Activated naive CD4-positive, alpha-beta T cell treated with anti-CD3 and anti-CD28 coated beads, Interleukin-2, amount 10 ng/mL, durations not matched to agents 7 days and 5 days (primary cell): ENCODE measurements at regions of chr17 and their contacts with region 1.

Region 1: DNA sequence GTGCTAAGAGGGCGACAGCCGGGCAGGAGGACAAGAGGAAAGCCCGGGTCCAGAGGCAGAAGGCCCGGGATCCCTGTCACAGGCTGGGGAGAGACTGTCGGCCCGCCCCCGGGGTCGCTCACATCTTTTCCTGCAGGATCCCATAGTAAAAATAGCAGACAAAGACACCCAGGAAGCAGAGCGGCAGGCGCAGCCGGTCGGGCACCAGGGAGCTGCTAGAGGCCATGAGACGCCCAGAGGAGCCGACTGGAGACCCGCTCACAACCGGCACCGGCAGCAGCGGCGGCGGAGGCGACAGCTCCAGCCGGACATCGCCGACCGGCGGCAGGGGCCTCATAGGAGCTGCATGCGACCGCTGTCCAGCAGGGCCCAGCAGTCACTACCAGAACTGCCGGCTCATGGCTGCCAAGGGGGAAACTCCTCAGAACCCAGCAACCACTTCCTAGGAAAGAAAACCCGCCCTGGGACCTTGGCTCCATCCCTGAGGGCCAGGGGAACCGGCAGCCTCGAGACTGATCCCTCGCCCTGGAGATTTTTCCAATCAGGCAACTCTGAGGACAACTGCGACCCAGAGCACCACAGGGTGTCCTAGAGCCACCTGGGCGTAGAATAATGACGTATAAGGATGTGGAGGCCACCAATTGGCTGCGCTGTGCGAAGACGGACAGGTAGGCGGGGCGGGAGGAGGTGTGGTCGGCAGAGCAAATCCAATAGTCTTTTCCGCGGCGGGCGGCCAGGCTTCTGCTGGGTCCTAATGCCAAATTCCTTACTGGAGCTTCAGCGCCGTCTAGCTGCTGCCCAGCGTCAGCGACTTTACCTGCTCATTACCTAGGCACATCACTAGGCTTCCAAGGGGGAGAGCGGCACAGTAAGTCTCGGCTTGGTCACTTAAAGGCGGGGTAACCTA is at the start of gene SLC35B1:
- DNase-seq: peak; percentile 100
- H3K4me3 Mint-ChIP-seq: peak within 1 kb of the TSS; percentile 94
- H3K27ac Mint-ChIP-seq: peak within 1 kb of the TSS; percentile 95
- H3K4me1 Mint-ChIP-seq: peaks cover 51% of the 10 kb centered on the region
- H3K27me3 Mint-ChIP-seq: no peaks in the 10 kb centered on the region

Region 2: GRCh38 chr17:49567871-49568694 is 139.8 kb before region 1 on chr17:
- CTCF ChIA-PET with region 1: interaction called, 377 read pairs
- DNase-seq: peak; percentile 88
- H3K4me3 Mint-ChIP-seq: peak overlapping the region; percentile 43
- H3K27ac Mint-ChIP-seq: no peak overlapping the region
- H3K4me1 Mint-ChIP-seq: peaks cover 27% of the 10 kb centered on the region
- H3K27me3 Mint-ChIP-seq: peaks cover 66% of the 10 kb centered on the region

Region 3: GRCh38 chr17:49694847-49695683 is 12.8 kb before region 1 on chr17:
- CTCF ChIA-PET with region 1: interaction called, 53 read pairs
- DNase-seq: peak; percentile 80
- H3K4me3 Mint-ChIP-seq: no peak overlapping the region
- H3K27ac Mint-ChIP-seq: peak overlapping the region; percentile 33
- H3K4me1 Mint-ChIP-seq: peaks cover 39% of the 10 kb centered on the region
- H3K27me3 Mint-ChIP-seq: peaks cover 5% of the 10 kb centered on the region

Region 4: DNA sequence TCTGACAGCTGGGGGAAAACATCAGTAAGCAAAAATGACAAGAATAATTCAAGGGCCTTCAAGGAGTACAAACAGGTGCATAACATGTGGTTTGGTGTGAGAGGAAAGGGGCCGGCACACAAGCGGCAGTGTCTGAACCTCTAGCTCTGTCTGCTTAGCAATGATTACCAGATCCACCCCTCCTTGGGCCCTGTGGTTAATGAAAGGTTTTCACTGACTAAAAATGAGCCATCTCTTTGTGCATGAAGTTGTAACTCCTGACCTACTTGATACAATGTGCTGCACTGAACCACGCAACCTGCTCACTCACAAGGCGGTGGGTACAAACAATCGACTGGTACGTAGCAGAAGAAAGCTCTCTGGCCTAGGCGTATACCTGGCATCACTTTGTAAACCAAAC is 40.9 kb after region 1 on chr17:
- CTCF ChIA-PET with region 1: interaction called, 16 read pairs
- DNase-seq: peak; percentile 69
- H3K4me3 Mint-ChIP-seq: peak overlapping the region; percentile 76
- H3K27ac Mint-ChIP-seq: peak overlapping the region; percentile 95
- H3K4me1 Mint-ChIP-seq: peaks cover 82% of the 10 kb centered on the region
- H3K27me3 Mint-ChIP-seq: no peaks in the 10 kb centered on the region

Region 5: DNA sequence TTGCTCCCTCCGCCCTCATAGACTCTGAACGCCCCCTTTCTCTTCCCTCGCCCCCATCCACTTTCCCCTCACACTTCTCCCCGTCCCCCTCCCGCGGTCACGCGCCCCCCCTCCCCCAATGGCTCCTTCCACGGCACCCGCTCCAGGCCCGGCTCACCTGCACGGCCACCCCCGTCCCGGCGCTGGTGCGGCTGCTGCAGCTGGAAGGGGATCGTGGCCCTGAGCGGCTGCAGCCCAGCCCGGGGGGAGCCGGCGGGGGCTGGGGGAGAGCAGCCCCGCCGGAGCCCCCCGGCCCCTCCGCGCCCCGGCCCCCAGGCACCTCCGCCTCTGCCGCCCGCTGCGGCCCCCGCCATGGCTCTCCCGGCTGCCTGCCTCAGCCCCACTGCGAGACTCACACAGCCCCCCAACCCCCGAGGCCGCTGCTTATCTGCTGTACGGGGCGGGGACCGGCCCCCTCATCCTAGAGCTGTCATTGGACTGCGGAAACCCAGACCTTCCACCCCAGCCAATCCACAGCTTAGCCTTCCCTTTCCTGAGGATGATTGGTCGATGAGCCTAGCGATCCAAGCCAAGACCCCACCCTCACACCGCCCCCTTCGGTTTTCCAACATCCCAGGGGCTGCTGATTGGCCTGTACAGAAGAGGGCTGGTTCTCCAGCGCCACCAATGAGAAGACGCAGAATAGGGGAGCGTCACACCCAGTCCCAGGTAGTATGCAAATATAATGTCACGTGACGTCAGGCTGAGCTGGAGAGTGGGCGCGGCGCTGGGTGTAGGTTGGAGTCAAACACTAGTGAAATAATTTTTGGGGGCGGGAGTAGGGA is 56.1 kb after region 1 on chr17 and contains the start of gene FAM117A:
- CTCF ChIA-PET with region 1: interaction called, 10 read pairs
- DNase-seq: peak; percentile 99
- H3K4me3 Mint-ChIP-seq: peak within 1 kb of the TSS; percentile 90
- H3K27ac Mint-ChIP-seq: peak within 1 kb of the TSS; percentile 86
- H3K4me1 Mint-ChIP-seq: peaks cover 50% of the 10 kb centered on the region
- H3K27me3 Mint-ChIP-seq: peaks cover 30% of the 10 kb centered on the region

Region 6: DNA sequence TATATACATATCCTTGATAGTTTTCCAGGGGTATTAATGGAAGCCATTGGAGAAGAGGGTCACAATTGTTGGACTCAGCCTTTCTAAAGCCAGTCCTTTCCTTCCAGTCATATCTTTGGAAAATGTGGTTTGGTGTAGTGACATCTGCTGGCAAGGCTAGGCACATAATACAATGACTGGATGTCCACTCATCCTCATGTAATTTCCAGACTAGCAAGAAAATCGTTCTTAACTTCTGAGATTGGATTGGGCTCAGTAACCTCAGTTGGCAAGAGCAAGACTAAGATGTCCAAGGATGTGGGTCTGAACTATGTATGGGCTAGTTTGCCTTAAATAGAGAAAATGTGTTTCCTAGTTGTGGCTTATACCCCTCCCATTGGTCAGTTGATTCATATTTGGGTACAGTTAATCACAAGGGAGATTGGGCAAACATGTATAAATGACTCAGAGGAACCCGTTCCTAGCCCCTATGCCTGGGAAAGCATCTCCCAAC is 71.9 kb after region 1 on chr17:
- CTCF ChIA-PET with region 1: interaction called, 13 read pairs
- DNase-seq: peak; percentile 37
- H3K4me3 Mint-ChIP-seq: no peak overlapping the region
- H3K27ac Mint-ChIP-seq: no peak overlapping the region
- H3K4me1 Mint-ChIP-seq: no peaks in the 10 kb centered on the region
- H3K27me3 Mint-ChIP-seq: peaks cover 12% of the 10 kb centered on the region